CD8-positive, alpha-beta T cell (primary cell): ENCODE measurements at regions of chr9 and their contacts with region 1.

Region 1: DNA sequence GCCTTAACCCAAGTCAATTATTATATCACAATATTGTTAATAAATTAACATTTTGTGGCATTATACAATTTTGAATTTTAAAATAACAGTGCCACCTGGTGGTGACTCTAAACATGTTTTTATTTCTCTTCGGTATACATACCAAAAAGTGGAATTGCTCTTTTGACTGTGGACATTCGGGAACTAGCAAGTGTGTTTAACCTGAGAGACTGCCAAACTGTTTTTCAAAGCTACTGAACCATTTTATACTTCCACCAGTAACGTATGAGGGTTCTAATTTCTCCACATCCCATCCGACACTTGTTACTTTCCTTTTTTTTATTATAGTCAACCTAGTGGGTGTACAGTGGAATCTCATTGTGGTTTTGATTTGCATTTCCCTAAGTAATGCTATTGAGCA is 18.3 kb upstream of the HSDL2 start:
- DNase-seq: peak in 3 of 9 experiments; percentile 40 to 67 (median 59)
- ATAC-seq: no peak
- H3K4me3 ChIP-seq: no peak overlapping the region
- H3K4me3 Mint-ChIP-seq: no peak overlapping the region
- H3K27ac ChIP-seq: no peak overlapping the region
- H3K27ac Mint-ChIP-seq: no peak overlapping the region
- H3K4me1 ChIP-seq: no peaks in the 10 kb centered on the region
- H3K4me1 Mint-ChIP-seq: peaks cover 4% of the 10 kb centered on the region
- H3K27me3 ChIP-seq: no peaks in the 10 kb centered on the region
- H3K27me3 Mint-ChIP-seq: peaks cover 2% of the 10 kb centered on the region
- CTCF ChIP-seq: peak; percentile 78

Region 2: GRCh38 chr9:111759762-111760639 is 601.6 kb before region 1 on chr9:
- CTCF ChIA-PET with region 1: interaction called, 13 read pairs
- POLR2A ChIA-PET with region 1: no interaction called
- intact Hi-C with region 1: loop called (anchors 2 kb)
- DNase-seq: peak in 7 of 9 experiments; percentile 6 to 79 (median 41)
- ATAC-seq: peak; percentile 67
- H3K4me3 ChIP-seq: no peak overlapping the region
- H3K4me3 Mint-ChIP-seq: no peak overlapping the region
- H3K27ac ChIP-seq: no peak overlapping the region
- H3K27ac Mint-ChIP-seq: no peak overlapping the region
- H3K4me1 ChIP-seq: no peaks in the 10 kb centered on the region
- H3K4me1 Mint-ChIP-seq: peaks cover 4% of the 10 kb centered on the region
- H3K27me3 ChIP-seq: no peaks in the 10 kb centered on the region
- H3K27me3 Mint-ChIP-seq: no peaks in the 10 kb centered on the region
- CTCF ChIP-seq: peak; percentile 81

Region 3: GRCh38 chr9:112097712-112098688 is 263.6 kb before region 1 on chr9:
- CTCF ChIA-PET with region 1: interaction called, 112 read pairs
- POLR2A ChIA-PET with region 1: interaction called, 3 read pairs
- intact Hi-C with region 1: loop called (anchors 1 kb)
- DNase-seq: peak; percentile 41 to 84 (median 65)
- ATAC-seq: peak; percentile 78
- H3K4me3 ChIP-seq: no peak overlapping the region
- H3K4me3 Mint-ChIP-seq: no peak overlapping the region
- H3K27ac ChIP-seq: no peak overlapping the region
- H3K27ac Mint-ChIP-seq: no peak overlapping the region
- H3K4me1 ChIP-seq: peaks cover 4% of the 10 kb centered on the region
- H3K4me1 Mint-ChIP-seq: peaks cover 20% of the 10 kb centered on the region
- H3K27me3 ChIP-seq: no peaks in the 10 kb centered on the region
- H3K27me3 Mint-ChIP-seq: no peaks in the 10 kb centered on the region
- CTCF ChIP-seq: peak; percentile 89

Region 4: GRCh38 chr9:112224401-112225289 is 137.0 kb before region 1 on chr9:
- CTCF ChIA-PET with region 1: interaction called, 11 read pairs
- POLR2A ChIA-PET with region 1: no interaction called
- intact Hi-C with region 1: no loop called
- DNase-seq: no peak
- ATAC-seq: no peak
- H3K4me3 ChIP-seq: no peak overlapping the region
- H3K4me3 Mint-ChIP-seq: no peak overlapping the region
- H3K27ac ChIP-seq: no peak overlapping the region
- H3K27ac Mint-ChIP-seq: no peak overlapping the region
- H3K4me1 ChIP-seq: no peaks in the 10 kb centered on the region
- H3K4me1 Mint-ChIP-seq: peaks cover 6% of the 10 kb centered on the region
- H3K27me3 ChIP-seq: no peaks in the 10 kb centered on the region
- H3K27me3 Mint-ChIP-seq: no peaks in the 10 kb centered on the region
- CTCF ChIP-seq: no peak

Region 5: DNA sequence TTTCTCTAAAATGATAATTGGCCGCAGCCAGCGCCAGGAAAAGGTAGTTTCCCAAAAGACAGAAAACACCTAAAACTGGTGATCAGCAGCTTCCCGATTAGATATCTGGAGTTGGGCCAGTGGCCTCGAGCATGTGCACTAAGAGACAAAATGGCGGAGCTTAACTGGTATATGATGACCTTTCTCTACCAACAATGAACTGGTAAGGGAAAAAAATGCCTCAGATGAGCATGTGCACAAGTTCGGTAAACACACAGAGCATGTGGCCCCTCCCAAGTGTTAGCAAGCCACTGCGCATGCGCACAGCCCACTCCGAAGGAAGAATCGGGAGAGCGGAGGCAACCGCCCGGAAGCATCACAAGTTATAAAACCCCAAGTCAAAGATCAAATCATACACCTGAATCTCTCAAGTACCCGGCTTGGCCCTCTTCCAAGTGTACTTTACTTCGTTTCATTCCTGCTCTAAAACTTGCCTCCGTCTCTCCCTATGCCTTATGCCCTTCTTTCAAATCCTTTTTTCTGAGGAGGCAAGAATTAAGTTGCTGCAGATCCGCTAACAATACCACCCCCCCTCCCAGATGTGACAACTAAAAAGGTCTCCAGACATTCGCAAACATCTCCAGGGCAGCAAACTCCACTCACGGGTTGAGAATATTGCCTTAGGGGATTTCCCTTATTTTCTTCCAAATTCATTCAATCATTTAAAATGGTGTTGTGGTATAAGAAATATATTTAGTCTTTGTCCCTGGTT is 13.2 kb before region 1 on chr9:
- CTCF ChIA-PET with region 1: interaction called, 14 read pairs
- POLR2A ChIA-PET with region 1: no interaction called
- intact Hi-C with region 1: no loop called
- DNase-seq: peak; percentile 19 to 82 (median 68)
- ATAC-seq: peak; percentile 40
- H3K4me3 ChIP-seq: peak overlapping the region; percentile 2 to 21
- H3K4me3 Mint-ChIP-seq: peak overlapping the region; percentile 72
- H3K27ac ChIP-seq: no peak overlapping the region
- H3K27ac Mint-ChIP-seq: no peak overlapping the region
- H3K4me1 ChIP-seq: peaks cover 3% of the 10 kb centered on the region
- H3K4me1 Mint-ChIP-seq: peaks cover 10% of the 10 kb centered on the region
- H3K27me3 ChIP-seq: peaks cover 0 to 2% of the 10 kb centered on the region in 2 experiments
- H3K27me3 Mint-ChIP-seq: peaks cover 2% of the 10 kb centered on the region
- CTCF ChIP-seq: no peak

Region 6: GRCh38 chr9:112401175-112401815 is 39.7 kb after region 1 on chr9:
- CTCF ChIA-PET with region 1: no interaction called
- POLR2A ChIA-PET with region 1: no interaction called
- intact Hi-C with region 1: no loop called
- DNase-seq: no peak
- ATAC-seq: no peak
- H3K4me3 ChIP-seq: no peak overlapping the region
- H3K4me3 Mint-ChIP-seq: no peak overlapping the region
- H3K27ac ChIP-seq: no peak overlapping the region
- H3K27ac Mint-ChIP-seq: no peak overlapping the region
- H3K4me1 ChIP-seq: no peaks in the 10 kb centered on the region
- H3K4me1 Mint-ChIP-seq: no peaks in the 10 kb centered on the region
- H3K27me3 ChIP-seq: no peaks in the 10 kb centered on the region
- H3K27me3 Mint-ChIP-seq: no peaks in the 10 kb centered on the region
- CTCF ChIP-seq: no peak

Region 7: DNA sequence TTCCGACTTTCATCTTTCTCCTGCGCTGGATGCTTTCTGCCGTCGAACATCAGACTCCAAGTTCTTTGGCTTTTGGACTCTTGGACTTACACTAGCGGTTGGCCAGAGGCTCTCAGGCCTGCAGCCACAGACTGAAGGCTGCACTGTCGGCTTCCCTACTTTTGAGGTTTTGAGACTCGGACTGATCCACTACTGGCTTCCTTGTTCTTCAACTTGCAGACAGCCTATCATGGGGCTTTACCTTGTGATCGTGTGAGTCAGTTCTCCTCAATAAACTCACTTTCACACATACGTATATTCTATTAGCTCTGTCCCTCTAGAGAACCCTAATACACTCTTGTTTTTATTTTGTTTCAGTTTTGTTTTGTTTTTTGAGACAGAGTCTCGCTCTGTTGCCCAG is 849.2 kb after region 1 on chr9:
- CTCF ChIA-PET with region 1: no interaction called
- POLR2A ChIA-PET with region 1: no interaction called
- intact Hi-C with region 1: no loop called
- DNase-seq: no peak
- ATAC-seq: no peak
- H3K4me3 ChIP-seq: no peak overlapping the region
- H3K4me3 Mint-ChIP-seq: no peak overlapping the region
- H3K27ac ChIP-seq: no peak overlapping the region
- H3K27ac Mint-ChIP-seq: no peak overlapping the region
- H3K4me1 ChIP-seq: no peaks in the 10 kb centered on the region
- H3K4me1 Mint-ChIP-seq: peaks cover 19% of the 10 kb centered on the region
- H3K27me3 ChIP-seq: no peaks in the 10 kb centered on the region
- H3K27me3 Mint-ChIP-seq: no peaks in the 10 kb centered on the region
- CTCF ChIP-seq: no peak

Region 8: GRCh38 chr9:113343732-113344231 is 982.2 kb after region 1 on chr9:
- CTCF ChIA-PET with region 1: no interaction called
- POLR2A ChIA-PET with region 1: no interaction called
- intact Hi-C with region 1: no loop called
- DNase-seq: peak in 1 of 9 experiments; percentile 32
- ATAC-seq: no peak
- H3K4me3 ChIP-seq: no peak overlapping the region
- H3K4me3 Mint-ChIP-seq: no peak overlapping the region
- H3K27ac ChIP-seq: no peak overlapping the region
- H3K27ac Mint-ChIP-seq: no peak overlapping the region
- H3K4me1 ChIP-seq: peaks cover 19% of the 10 kb centered on the region
- H3K4me1 Mint-ChIP-seq: peaks cover 24% of the 10 kb centered on the region
- H3K27me3 ChIP-seq: no peaks in the 10 kb centered on the region
- H3K27me3 Mint-ChIP-seq: no peaks in the 10 kb centered on the region
- CTCF ChIP-seq: no peak